WTC11 (cell line): ENCODE measurements at regions of chr2 and their contacts with region 1.

Region 1: DNA sequence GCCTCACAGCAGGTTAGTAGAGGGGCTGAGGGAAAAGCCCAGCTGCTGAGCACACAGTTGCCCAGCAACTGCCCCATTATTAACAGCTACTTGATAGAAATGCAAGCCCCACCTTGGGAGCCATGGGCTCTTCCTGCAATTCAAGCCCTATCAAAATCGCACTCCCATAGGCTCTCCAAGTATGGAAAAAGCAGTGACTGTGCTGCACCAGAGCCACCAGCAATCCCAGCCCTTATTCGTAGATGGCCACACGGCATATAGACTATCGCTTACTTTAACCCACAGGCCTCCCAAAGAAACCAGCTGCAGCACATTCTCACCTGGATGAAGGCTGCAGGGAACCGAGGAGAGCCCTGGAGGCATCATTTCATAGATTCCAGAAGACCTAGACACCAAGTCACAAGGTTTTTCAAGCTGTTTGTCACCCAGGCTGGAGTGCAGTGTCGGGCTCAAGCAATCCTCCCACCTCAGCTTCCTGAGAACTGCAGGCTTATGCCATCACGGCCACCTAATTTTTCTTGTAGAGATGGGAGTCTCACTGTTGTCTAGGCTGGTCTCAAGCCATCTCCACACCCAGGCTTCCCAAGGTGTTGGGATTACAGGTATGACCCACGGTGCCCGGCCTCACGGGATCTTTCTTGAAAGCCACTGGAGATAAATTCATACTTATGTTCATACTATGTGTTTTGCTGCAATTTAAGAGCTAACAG is 11.3 kb downstream of the NCL start:
- DNase-seq: no peak
- ATAC-seq: peak; percentile 25
- H3K4me3 Mint-ChIP-seq: no peak overlapping the region
- H3K27ac Mint-ChIP-seq: peak overlapping the region; percentile 93
- H3K4me1 Mint-ChIP-seq: peaks cover 40% of the 10 kb centered on the region
- H3K27me3 Mint-ChIP-seq: no peaks in the 10 kb centered on the region
- CTCF ChIP-seq: no peak

Region 2: DNA sequence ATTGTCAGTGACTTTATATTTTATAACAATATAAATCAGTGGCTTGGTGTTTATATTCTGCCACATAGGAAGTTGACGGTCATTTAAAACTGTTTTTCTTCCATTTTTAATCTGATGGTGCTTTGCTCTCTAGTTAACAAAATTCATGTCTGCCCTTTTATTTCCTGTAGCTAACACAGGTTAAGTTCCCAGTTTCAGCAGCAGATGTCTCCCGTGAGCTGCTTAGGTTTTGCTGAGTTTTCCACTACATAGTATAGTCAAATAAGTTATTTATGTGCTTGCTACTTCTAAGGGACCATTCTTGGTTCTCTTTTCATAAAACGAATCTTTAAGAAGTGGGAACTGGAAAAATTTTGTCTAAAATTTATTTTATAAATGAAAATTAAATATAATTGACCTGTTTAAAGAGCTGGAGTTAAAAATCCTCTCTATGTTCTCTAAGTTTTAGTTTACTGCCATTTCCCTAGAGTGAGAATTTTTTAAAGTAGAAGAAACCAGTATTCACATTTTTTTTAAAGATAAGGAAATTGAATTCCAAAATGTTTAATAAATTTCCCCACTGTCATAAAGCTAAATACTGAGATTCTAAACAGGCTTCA is 348.7 kb before region 1 on chr2:
- CTCF ChIA-PET with region 1: interaction called, 11 read pairs
- POLR2A ChIA-PET with region 1: no interaction called
- DNase-seq: peak; percentile 59
- ATAC-seq: peak; percentile 88
- H3K4me3 Mint-ChIP-seq: no peak overlapping the region
- H3K27ac Mint-ChIP-seq: no peak overlapping the region
- H3K4me1 Mint-ChIP-seq: no peaks in the 10 kb centered on the region
- H3K27me3 Mint-ChIP-seq: no peaks in the 10 kb centered on the region
- CTCF ChIP-seq: peak; percentile 39; the same call in 1 of the 2 replicates

Region 3: GRCh38 chr2:231227309-231228162 is 225.4 kb before region 1 on chr2:
- CTCF ChIA-PET with region 1: interaction called, 60 read pairs
- POLR2A ChIA-PET with region 1: interaction called, 6 read pairs
- DNase-seq: peak; percentile 51
- ATAC-seq: peak; percentile 93
- H3K4me3 Mint-ChIP-seq: no peak overlapping the region
- H3K27ac Mint-ChIP-seq: peak overlapping the region; percentile 77
- H3K4me1 Mint-ChIP-seq: peaks cover 21% of the 10 kb centered on the region
- H3K27me3 Mint-ChIP-seq: no peaks in the 10 kb centered on the region
- CTCF ChIP-seq: peak; percentile 50

Region 4: GRCh38 chr2:231370749-231371429 is 82.1 kb before region 1 on chr2:
- CTCF ChIA-PET with region 1: interaction called, 5 read pairs
- POLR2A ChIA-PET with region 1: interaction called, 15 read pairs
- DNase-seq: peak; percentile 66
- ATAC-seq: peak; percentile 71
- H3K4me3 Mint-ChIP-seq: peak overlapping the region; percentile 36; the same call in 1 of the 2 replicates
- H3K27ac Mint-ChIP-seq: peak overlapping the region; percentile 98
- H3K4me1 Mint-ChIP-seq: peaks cover 73% of the 10 kb centered on the region
- H3K27me3 Mint-ChIP-seq: no peaks in the 10 kb centered on the region
- CTCF ChIP-seq: no peak

Region 5: DNA sequence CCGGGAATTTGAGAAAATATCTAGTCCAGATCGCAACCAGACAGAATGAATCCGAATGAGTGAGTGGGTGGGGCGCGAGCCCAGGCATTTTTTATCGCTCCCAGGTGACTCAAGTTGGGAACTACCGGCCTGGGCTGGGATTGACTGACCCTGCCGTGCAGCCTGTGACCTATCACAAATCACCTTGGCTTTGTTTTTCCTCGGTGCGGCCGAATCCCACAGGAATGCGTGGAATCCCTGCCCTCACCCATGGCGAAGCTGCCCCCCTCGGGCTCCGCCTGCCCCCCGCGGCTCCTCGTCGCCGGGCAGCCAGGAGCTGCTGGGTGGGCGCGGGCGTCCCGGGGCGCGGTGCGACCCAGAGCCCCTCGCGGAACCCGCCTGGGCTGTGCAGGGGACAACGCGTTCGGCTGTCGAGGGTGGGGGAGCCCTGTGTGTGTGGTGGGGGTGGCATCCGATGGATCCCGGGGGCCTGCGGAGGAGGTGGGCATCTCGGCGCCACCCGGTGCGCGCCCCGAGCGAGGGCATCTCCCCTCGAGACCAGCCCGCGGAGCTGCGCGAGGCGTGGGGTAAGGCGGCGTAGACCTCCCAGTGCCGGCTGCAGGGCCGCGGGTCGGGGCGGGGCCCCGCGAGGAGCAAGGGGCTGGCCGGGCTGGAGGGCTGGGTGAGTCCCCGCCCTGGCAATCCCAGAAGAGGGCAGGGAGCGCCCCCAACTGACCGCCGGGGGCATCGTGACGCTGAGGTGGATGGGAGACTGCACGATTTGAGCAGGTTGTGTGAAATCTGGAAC is 40.9 kb before region 1 on chr2:
- CTCF ChIA-PET with region 1: interaction called, 58 read pairs
- POLR2A ChIA-PET with region 1: interaction called, 4 read pairs
- DNase-seq: peak; percentile 95
- ATAC-seq: peak; percentile 85
- H3K4me3 Mint-ChIP-seq: peak overlapping the region; percentile 69
- H3K27ac Mint-ChIP-seq: peak overlapping the region; percentile 99
- H3K4me1 Mint-ChIP-seq: peaks cover 60% of the 10 kb centered on the region
- H3K27me3 Mint-ChIP-seq: no peaks in the 10 kb centered on the region
- CTCF ChIP-seq: peak; percentile 76

Region 6: DNA sequence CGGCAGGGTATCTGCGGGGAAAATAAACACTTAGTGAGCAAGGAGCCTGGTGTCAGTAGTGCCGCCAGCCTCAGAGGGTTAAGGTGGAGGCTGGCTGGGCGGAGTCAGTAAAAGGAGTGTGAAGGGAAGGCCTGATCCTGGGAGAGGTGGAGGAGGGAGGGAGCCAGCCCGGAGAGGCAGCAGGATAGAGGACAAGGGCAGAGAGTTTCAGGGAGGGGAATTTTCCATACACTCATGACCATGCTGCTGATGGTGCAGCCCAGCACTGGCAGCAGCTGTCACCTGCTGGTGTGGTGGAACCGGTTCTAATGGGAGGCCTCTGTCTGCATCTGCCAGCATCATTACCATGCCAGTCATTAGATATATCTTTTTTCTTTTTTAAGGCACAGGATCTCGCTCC is 137.7 kb after region 1 on chr2:
- CTCF ChIA-PET with region 1: no interaction called
- POLR2A ChIA-PET with region 1: no interaction called
- DNase-seq: no peak
- ATAC-seq: peak; percentile 83
- H3K4me3 Mint-ChIP-seq: no peak overlapping the region
- H3K27ac Mint-ChIP-seq: no peak overlapping the region
- H3K4me1 Mint-ChIP-seq: peaks cover 8% of the 10 kb centered on the region
- H3K27me3 Mint-ChIP-seq: no peaks in the 10 kb centered on the region; the same call in 1 of the 2 replicates
- CTCF ChIP-seq: no peak

Region 7: DNA sequence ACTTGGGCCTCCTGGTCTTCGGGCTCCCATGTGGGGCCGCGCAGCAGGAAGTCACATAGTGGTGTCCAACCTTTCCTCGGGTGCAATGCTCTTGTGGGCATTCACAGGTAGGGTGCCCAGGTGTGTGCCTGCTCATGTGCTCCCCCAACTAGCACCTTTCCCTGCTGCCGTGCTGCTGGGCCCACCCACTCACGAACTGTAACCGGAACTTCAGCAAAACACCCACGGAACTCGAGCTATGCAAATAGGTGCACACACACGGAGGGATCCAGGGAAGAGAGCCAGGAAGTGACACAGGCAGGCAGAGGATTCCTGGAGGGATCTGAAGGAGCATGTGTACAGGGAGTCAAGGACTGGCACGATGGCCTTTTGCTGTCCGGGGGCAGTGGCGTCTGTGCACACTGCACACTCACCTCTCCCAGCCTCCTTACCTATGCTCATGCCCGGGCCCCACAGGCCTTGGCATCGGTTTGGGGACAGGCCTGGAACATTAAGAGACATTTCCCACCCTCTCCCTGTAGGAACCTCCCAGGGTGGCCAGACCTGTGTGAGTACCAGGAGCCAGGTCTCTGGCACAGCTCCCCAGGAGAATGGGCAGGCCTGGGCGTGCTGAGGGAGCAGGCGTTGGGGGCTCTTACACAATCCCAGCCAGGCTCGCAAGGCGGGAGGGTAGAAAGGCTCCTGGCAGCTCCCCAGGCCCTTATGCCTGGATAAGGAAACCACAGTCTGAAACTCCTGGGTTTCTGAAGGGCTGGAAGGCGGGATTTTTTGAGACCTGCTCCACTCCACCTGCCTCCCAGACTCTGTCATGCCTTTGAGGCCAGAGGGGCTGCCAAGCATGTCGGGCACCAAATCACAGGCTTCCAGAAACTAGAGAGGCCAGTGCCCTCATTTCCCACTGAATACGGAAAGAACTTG is 248.8 kb after region 1 on chr2:
- CTCF ChIA-PET with region 1: no interaction called
- POLR2A ChIA-PET with region 1: no interaction called
- DNase-seq: no peak
- ATAC-seq: no peak
- H3K4me3 Mint-ChIP-seq: no peak overlapping the region
- H3K27ac Mint-ChIP-seq: peak overlapping the region; percentile 55; the same call in 1 of the 2 replicates
- H3K4me1 Mint-ChIP-seq: peaks cover 13% of the 10 kb centered on the region
- H3K27me3 Mint-ChIP-seq: peaks cover 3% of the 10 kb centered on the region; the same call in 1 of the 2 replicates
- CTCF ChIP-seq: no peak